Pancreas (tissue), 10 donors: ENCODE measurements at regions of chr18 and their contacts with region 1.

Region 1: GRCh38 chr18:78999937-79000336 is 20.3 kb downstream of the SALL3 start:
- DNase-seq: no peak
- ATAC-seq: peak in 1 of 4 donors; percentile 38
- H3K4me3 ChIP-seq: no peak overlapping the region
- H3K27ac ChIP-seq: no peak overlapping the region
- H3K4me1 ChIP-seq: no peaks in the 10 kb centered on the region
- H3K27me3 ChIP-seq: peaks cover 0 to 6% (median 0%) of the 10 kb centered on the region in 4 donors
- CTCF ChIP-seq: no peak

Region 2: DNA sequence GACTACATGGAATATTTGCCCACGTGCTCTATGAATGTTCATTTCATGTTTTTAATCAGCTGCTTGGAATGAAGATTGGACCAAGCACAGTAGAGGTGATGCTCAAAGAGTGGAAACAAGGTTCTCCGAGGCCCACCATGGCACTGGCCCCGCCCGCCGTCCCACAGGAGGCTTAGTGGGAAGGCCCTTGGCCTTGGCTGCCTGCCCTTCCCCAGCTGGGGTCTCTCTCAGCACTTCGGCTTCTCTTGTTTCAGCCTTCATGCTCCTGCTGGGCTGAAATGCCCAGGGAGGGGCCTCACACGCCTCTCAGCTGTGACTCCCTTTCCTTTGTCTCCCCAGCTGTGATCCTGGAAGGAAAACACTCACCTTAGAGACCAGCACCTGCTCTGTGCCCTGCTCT is 917.1 kb before region 1 on chr18:
- intact Hi-C with region 1: loop called in 1 of 3 experiments (anchors 10 kb)
- DNase-seq: no peak
- ATAC-seq: no peak
- H3K4me3 ChIP-seq: no peak overlapping the region
- H3K27ac ChIP-seq: no peak overlapping the region
- H3K4me1 ChIP-seq: no peaks in the 10 kb centered on the region
- H3K27me3 ChIP-seq: peaks cover 0 to 2% (median 0%) of the 10 kb centered on the region in 4 donors
- CTCF ChIP-seq: no peak